ENCODE measurements at regions of chr11 and their contacts with region 1.

Region 1: GRCh38 chr11:128956401-128957201 is 13.9 kb upstream of the TP53AIP1 start:
- DNase-seq: no peak
- H3K4me3 Mint-ChIP-seq: no peak overlapping the region
- H3K27ac Mint-ChIP-seq: no peak overlapping the region
- H3K4me1 Mint-ChIP-seq: no peaks in the 10 kb centered on the region
- H3K27me3 Mint-ChIP-seq: peaks cover 14% of the 10 kb centered on the region

Region 2: GRCh38 chr11:128893578-128894285 is 62.9 kb before region 1 on chr11:
- CTCF ChIA-PET with region 1: interaction called, 219 read pairs
- DNase-seq: no peak
- H3K4me3 Mint-ChIP-seq: no peak overlapping the region
- H3K27ac Mint-ChIP-seq: no peak overlapping the region
- H3K4me1 Mint-ChIP-seq: peaks cover 15% of the 10 kb centered on the region
- H3K27me3 Mint-ChIP-seq: peaks cover 77% of the 10 kb centered on the region

Region 3: GRCh38 chr11:128905345-128906184 is 51.0 kb before region 1 on chr11:
- CTCF ChIA-PET with region 1: interaction called, 12 read pairs
- DNase-seq: peak; percentile 64
- H3K4me3 Mint-ChIP-seq: peak overlapping the region; percentile 70
- H3K27ac Mint-ChIP-seq: no peak overlapping the region
- H3K4me1 Mint-ChIP-seq: peaks cover 12% of the 10 kb centered on the region
- H3K27me3 Mint-ChIP-seq: peaks cover 85% of the 10 kb centered on the region